Activated CD4-positive, alpha-beta memory T cell treated with anti-CD3 and anti-CD28 coated beads, Interleukin-2, amount 10 ng/mL, durations not matched to agents 7 days and 5 days (primary cell): ENCODE measurements at regions of chr1 and their contacts with region 1.

Region 1: DNA sequence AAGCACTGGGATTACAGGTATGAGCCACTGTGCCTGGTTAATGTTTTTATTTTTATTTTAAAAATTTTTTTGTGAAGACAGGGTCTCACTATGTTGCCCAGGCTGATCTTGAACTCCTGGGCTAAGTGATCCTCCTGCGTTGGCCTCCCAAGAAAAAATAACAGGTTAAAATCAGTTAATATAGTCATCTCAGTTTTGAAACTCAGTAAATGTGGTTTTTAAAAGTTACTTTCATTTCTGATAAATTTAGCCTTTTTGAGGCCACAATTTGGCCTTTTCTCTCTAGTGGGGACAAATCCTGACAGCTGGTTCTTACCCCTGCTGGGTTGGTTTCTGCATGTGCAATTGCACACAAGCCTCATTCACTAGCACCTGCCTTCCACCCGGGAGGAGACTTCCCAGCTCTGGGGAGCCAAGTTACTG is 13.3 kb downstream of the PMF1 start:
- DNase-seq: no peak
- H3K4me3 Mint-ChIP-seq: no peak overlapping the region
- H3K27ac Mint-ChIP-seq: peak overlapping the region; percentile 84
- H3K4me1 Mint-ChIP-seq: peaks cover 58% of the 10 kb centered on the region
- H3K27me3 Mint-ChIP-seq: no peaks in the 10 kb centered on the region

Region 2: DNA sequence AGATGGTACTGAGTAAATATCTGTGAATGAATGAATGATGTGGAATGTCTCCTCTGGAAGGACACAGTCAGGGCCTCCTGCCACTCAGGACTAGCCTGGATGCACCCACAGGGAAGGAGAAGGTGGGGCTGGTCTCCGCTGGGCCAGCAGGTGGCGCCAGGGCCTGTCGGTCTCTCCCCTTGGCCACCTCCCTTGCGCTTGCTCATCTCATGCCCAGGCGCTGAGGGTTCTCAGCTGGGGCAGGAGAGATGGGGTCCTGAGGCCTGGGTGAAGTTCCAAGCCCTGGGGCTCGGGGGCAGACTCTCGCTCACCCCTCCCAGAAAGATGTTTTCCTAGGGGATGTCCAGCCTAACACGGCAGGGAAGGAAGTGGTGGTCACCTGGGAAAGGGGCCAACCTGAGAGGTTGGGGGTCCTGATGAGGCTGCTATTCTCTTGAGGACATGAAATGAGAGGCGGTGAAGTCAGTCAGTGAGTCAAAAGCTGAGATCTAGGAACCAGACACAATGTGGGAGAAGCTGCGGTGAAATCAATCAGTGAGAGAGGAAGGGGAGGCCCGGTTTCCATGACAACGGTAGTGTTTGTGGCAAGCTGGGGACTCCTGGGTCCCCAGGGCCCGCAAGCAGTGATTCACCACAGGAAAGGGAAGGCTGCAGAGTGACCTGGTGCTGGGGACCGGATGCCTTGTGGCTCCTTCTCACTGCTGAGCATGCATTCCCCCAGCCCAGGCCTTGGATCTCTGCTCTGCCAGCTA is 129.3 kb before region 1 on chr1:
- CTCF ChIA-PET with region 1: interaction called, 9 read pairs
- POLR2A ChIA-PET with region 1: interaction called, 17 read pairs
- DNase-seq: peak; percentile 88
- H3K4me3 Mint-ChIP-seq: peak overlapping the region; percentile 25
- H3K27ac Mint-ChIP-seq: peak overlapping the region; percentile 83
- H3K4me1 Mint-ChIP-seq: peaks cover 42% of the 10 kb centered on the region
- H3K27me3 Mint-ChIP-seq: peaks cover 13% of the 10 kb centered on the region

Region 3: GRCh38 chr1:156146020-156146768 is 79.9 kb before region 1 on chr1:
- CTCF ChIA-PET with region 1: interaction called, 179 read pairs
- POLR2A ChIA-PET with region 1: interaction called, 43 read pairs
- DNase-seq: peak; percentile 54
- H3K4me3 Mint-ChIP-seq: peak overlapping the region; percentile 23
- H3K27ac Mint-ChIP-seq: peak overlapping the region; percentile 68
- H3K4me1 Mint-ChIP-seq: peaks cover 29% of the 10 kb centered on the region
- H3K27me3 Mint-ChIP-seq: no peaks in the 10 kb centered on the region

Region 4: DNA sequence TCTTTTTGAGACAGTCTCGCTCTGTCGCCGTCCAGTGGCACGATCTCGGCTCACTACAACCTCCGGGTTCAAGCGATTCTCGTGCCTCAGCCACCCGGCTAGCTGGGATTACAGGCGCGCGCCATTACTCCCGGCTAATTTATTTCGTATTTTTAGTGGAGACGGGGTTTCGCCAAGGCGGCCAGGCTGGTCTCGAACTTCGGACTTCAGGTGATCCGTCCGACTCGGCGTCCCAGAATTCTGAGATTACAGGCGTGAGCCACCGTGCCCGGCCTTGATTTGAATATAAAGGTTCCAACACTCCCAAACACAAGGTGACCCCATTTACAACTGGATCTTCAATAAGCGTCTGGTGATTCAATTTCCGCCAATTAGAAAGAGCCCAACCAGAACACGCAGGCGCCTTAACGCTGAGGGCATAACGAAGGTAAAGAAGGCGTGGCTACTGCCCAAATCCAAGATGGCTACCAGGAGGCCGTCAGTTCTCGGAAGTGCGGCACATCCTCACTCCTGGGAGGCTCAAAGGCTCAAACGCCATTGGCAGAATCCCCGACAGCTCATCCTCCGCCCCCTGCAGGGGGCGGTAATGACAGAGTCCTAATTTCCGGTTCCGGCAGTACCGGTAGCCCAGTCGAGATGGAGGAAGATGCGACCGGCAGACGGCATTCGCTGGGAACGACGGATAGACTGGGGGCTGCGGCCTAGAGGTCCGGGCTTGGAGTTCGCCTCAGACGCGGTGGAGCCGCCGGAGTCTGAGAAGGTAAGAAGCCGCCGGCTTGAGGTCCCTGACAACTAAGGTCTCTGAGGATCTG is 32.4 kb before region 1 on chr1 and contains the start of gene SLC25A44:
- CTCF ChIA-PET with region 1: interaction called, 41 read pairs
- POLR2A ChIA-PET with region 1: interaction called, 27 read pairs
- DNase-seq: peak; percentile 98
- H3K4me3 Mint-ChIP-seq: peak within 1 kb of the TSS; percentile 85
- H3K27ac Mint-ChIP-seq: peak within 1 kb of the TSS; percentile 73
- H3K4me1 Mint-ChIP-seq: peaks cover 59% of the 10 kb centered on the region
- H3K27me3 Mint-ChIP-seq: no peaks in the 10 kb centered on the region
- total RNA-seq, gene SLC25A44: 27.7 to 36.3 TPM

Region 5: DNA sequence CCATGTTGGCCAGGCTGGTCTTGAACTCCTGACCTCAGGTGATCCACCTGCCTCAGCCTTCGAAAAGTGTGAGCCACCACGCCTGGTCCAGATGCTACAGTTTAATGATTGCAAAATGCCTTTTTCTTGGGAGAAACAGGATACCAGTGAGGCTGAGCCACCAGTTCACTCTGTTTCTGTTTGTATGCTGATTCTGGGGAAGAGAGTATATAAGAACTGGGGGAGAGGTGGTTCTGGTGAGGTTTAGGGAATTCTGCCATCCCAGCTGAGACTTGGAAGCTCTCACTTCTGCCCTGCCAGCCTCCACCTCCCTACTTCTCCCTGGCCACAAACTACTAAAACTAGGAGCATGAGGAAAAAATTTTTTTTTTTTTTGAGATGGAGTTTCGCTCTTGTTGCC is 21.4 kb before region 1 on chr1:
- CTCF ChIA-PET with region 1: interaction called, 41 read pairs
- POLR2A ChIA-PET with region 1: interaction called, 10 read pairs
- DNase-seq: no peak
- H3K4me3 Mint-ChIP-seq: no peak overlapping the region
- H3K27ac Mint-ChIP-seq: no peak overlapping the region
- H3K4me1 Mint-ChIP-seq: peaks cover 17% of the 10 kb centered on the region
- H3K27me3 Mint-ChIP-seq: no peaks in the 10 kb centered on the region